ENCODE measurements at regions of chr1 and their contacts with region 1.

Region 1: GRCh38 chr1:184958554-184959353 is 15.6 kb downstream of the NIBAN1 start:
- DNase-seq: no peak
- ATAC-seq: no peak
- H3K4me3 ChIP-seq: no peak overlapping the region
- H3K4me3 Mint-ChIP-seq: no peak overlapping the region
- H3K27ac ChIP-seq: no peak overlapping the region
- H3K27ac Mint-ChIP-seq: no peak overlapping the region
- H3K4me1 ChIP-seq: no peaks in the 10 kb centered on the region
- H3K4me1 Mint-ChIP-seq: peaks cover 9% of the 10 kb centered on the region
- H3K27me3 ChIP-seq: no peaks in the 10 kb centered on the region
- H3K27me3 Mint-ChIP-seq: peaks cover 2% of the 10 kb centered on the region
- CTCF ChIP-seq: no peak

Region 2: DNA sequence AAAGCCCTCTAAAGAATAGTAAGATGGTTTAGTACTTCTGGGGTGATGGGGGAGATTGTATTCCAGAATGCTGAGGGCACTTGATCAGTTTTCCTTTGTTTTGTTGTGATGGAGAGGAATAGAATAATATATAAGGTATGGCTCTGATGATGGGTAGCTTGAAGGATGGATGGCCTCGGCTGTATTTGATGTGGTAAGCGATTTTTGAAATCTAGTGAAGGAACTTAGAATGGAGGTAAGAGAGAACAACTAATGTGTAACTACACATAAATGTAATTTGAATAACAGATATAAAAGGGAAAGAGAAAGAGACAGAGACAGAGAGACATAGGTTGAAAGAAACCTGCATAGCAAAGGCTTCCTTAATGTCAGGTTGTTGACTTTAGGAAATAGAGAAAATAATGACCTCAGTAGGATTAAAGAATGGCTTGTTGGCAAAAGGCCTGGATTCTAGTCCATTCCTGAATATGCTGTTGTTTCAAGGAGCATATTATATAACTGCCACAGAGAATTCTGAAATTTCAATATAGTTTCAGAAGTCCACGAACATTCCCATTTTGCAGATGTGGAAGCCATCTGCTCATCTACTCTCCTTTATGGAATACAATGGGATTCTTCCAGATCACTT is 43.2 kb before region 1 on chr1:
- CTCF ChIA-PET with region 1: no interaction called
- POLR2A ChIA-PET with region 1: no interaction called
- intact Hi-C with region 1: loop called in 1 of 2 experiments (anchors 5 kb)
- DNase-seq: no peak
- ATAC-seq: no peak
- H3K4me3 ChIP-seq: no peak overlapping the region
- H3K4me3 Mint-ChIP-seq: no peak overlapping the region
- H3K27ac ChIP-seq: no peak overlapping the region
- H3K27ac Mint-ChIP-seq: no peak overlapping the region
- H3K4me1 ChIP-seq: no peaks in the 10 kb centered on the region
- H3K4me1 Mint-ChIP-seq: peaks cover 7% of the 10 kb centered on the region
- H3K27me3 ChIP-seq: no peaks in the 10 kb centered on the region
- H3K27me3 Mint-ChIP-seq: peaks cover 4% of the 10 kb centered on the region
- CTCF ChIP-seq: no peak

Region 3: DNA sequence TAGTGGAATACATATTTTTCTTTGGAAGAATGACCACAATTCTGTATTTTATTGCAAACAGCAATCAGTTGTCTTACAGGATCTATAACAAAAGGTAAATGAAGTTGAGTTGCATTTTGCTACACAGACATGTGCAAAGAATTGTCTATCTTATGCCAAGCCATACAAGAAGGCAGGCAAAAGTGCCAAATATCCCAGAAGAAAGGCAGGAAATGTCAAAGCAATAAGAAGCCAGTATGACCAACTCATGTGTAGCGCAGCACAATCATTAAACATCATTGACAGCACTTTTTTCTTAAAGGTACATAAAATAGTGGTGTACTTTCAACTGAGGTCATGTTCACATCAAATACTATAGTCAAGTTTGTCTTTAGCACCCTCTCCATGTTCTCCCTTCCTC is 27.2 kb before region 1 on chr1:
- CTCF ChIA-PET with region 1: no interaction called
- POLR2A ChIA-PET with region 1: no interaction called
- intact Hi-C with region 1: no loop called
- DNase-seq: no peak
- ATAC-seq: no peak
- H3K4me3 ChIP-seq: no peak overlapping the region
- H3K4me3 Mint-ChIP-seq: no peak overlapping the region
- H3K27ac ChIP-seq: no peak overlapping the region
- H3K27ac Mint-ChIP-seq: no peak overlapping the region
- H3K4me1 ChIP-seq: no peaks in the 10 kb centered on the region
- H3K4me1 Mint-ChIP-seq: peaks cover 3% of the 10 kb centered on the region
- H3K27me3 ChIP-seq: no peaks in the 10 kb centered on the region
- H3K27me3 Mint-ChIP-seq: no peaks in the 10 kb centered on the region
- CTCF ChIP-seq: no peak